Activated CD4-positive, alpha-beta T cell treated with anti-CD3 and anti-CD28 coated beads, Interleukin-2, amount 10 ng/mL, durations not matched to agents 24 days and 14 days (primary cell): ENCODE measurements at regions of chr16 and their contacts with region 1.

Region 1: DNA sequence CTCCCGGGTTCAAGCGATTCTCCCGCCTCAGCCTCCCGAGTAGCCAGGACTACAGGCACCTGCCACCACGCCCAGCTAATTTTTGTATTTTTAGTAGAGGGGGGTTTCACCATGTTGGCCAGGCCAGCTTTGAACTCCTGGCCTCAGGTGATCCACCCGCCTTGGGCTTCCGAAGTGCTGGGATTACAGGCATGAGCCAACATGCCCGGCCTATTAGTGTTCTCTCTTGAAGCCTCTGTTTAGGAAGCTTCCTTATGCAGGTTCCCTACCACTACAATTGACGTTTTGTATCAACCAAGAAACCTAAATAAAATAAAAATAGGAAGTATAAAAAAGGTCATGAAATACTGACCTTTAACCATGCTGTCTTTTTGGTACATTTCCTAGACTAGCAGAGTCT is 16.0 kb downstream of the CHST5 start:
- DNase-seq: no peak
- H3K4me3 Mint-ChIP-seq: no peak overlapping the region
- H3K27ac Mint-ChIP-seq: no peak overlapping the region
- H3K4me1 Mint-ChIP-seq: peaks cover 10% of the 10 kb centered on the region
- H3K27me3 Mint-ChIP-seq: peaks cover 7% of the 10 kb centered on the region

Region 2: DNA sequence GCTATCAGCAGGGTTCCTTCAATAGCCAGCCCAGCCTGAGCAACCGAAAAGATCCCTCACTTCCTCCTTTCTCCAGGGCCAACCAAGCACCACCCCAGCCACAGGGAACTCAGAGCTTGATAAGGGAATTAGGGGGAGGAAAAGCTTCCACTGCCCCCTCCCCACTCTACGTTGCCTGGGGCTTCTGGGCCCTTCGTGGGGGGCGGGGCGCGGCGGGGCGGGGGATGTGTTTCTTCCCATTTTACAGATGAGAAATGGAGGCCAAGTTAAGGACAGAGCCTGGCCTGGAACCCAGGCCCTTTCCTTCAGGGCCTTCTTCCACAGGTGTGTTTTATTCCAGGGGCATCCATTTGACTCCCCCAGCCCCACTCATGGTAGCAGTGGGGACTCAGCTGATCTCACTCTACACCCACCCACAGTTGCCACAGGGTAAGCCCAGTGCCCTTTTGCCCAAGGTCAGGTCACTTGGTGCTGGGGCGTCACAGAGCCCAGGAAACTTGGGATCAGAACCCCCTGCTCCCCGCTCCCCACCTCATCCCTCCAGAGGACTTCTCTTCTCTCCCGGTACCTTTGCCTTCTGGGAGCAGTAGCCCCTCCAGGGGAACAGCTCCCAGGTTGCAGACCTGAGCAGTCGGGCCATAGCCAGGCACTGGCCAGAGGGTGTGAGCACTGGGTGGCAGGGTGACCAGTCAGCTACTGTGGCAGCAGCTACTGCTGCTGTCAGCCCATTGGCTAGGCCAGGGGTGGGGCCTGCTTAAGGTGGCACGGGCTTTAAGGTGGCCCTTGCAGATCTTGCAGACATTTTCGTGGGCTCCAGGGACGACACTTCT is 403.6 kb before region 1 on chr16 and contains the start of gene LDHD:
- intact Hi-C with region 1: no loop called
- DNase-seq: peak; percentile 71
- H3K4me3 Mint-ChIP-seq: peak within 1 kb of the TSS; percentile 37
- H3K27ac Mint-ChIP-seq: no peak within 1 kb of the TSS
- H3K4me1 Mint-ChIP-seq: peaks cover 8% of the 10 kb centered on the region
- H3K27me3 Mint-ChIP-seq: no peaks in the 10 kb centered on the region
- total RNA-seq, gene LDHD: 0.09 and 0.24 TPM in 2 replicates

Region 3: DNA sequence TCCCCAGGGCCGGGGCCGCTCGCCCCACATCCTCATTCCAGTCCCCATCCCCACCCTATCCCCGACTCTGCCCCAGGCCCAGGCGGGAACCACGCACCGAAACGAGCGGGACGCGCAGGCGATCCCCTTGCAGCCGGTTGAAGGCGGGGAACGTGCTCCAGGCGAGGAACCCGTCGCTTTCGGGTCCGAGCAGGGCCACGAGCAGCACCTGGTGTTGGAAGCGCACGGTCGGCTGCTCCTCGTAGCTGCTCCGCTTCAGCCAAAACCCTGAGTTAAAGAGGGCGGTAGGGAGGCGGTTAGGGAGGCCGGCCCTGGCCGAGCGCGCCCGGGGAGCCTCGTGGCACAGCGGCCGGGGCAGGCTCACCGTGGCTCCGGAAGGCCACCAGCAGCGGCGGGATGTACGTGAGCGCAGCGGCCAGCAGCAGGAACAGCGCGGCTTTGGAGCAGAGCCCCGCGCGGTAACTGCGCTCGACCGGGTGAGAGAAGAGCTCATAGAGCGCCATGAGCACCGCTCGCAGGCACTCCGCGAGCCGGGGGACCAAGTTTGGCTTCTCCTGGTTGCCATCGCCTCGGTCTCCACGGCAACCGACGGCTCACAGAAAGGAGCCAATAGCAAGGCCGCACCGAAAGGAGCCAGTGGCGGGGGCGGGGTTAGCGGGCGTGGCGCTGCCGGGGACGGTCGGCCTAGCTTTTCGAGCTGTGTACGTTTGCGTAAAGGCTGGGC is 36.0 kb after region 1 on chr16 and contains the start of gene TMEM231:
- intact Hi-C with region 1: loop called (anchors 1 kb)
- DNase-seq: peak; percentile 99
- H3K4me3 Mint-ChIP-seq: peak within 1 kb of the TSS; percentile 92
- H3K27ac Mint-ChIP-seq: peak within 1 kb of the TSS; percentile 90
- H3K4me1 Mint-ChIP-seq: peaks cover 8% of the 10 kb centered on the region
- H3K27me3 Mint-ChIP-seq: peaks cover 20% of the 10 kb centered on the region
- total RNA-seq, gene TMEM231: 4.0 and 4.4 TPM in 2 replicates

Region 4: DNA sequence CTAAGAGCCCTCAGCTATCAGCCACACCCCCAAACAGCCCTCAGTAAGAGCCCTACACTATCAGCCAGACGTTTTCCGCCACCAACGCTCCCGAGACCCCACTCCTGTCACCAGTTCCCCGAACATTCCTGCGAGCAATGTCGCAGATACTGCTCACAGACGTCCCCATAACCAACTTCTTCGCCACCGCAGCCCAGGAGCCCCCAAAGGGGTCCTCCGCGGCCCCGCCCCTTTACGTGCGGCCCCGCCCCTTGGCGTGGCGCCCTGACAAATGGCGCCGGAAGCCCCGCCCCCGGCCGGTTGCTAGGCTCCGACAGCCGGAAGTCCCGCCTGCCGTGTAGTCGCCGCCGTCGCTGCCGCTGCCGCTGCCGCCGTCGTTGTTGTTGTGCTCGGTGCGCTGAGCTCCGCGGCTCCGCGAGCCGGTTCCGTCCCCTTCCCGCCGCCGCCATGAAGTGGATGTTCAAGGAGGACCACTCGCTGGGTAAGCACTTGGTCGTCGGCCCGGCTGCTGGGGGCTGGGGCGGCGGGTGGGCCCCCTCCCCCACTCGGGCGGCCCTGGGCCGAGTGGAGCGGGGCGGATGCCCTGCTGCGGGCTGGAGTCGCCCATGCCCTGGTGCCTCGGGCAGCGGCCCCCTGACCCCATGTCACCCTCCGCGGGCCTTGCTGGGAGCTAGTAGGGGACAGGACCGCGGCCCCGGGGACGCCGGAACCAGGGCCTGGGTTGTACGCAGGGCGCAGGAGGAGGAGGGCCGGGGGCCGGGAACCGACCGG is 46.3 kb after region 1 on chr16 and contains the start of gene GABARAPL2:
- intact Hi-C with region 1: loop called (anchors 2 kb)
- DNase-seq: peak; percentile 98
- H3K4me3 Mint-ChIP-seq: peak within 1 kb of the TSS; percentile 90
- H3K27ac Mint-ChIP-seq: peak within 1 kb of the TSS; percentile 87
- H3K4me1 Mint-ChIP-seq: peaks cover 28% of the 10 kb centered on the region
- H3K27me3 Mint-ChIP-seq: peaks cover 14% of the 10 kb centered on the region
- total RNA-seq, gene GABARAPL2: 69.9 and 70.4 TPM in 2 replicates

Region 5: GRCh38 chr16:75632857-75633256 is 113.0 kb after region 1 on chr16:
- intact Hi-C with region 1: no loop called
- DNase-seq: no peak
- H3K4me3 Mint-ChIP-seq: no peak overlapping the region
- H3K27ac Mint-ChIP-seq: no peak overlapping the region
- H3K4me1 Mint-ChIP-seq: peaks cover 22% of the 10 kb centered on the region
- H3K27me3 Mint-ChIP-seq: no peaks in the 10 kb centered on the region